Dendritic cell treated with granulocyte-macrophage colony-stimulating factor and Interleukin-4, amounts not matched to agents 40 ng/mL and 50 ng/mL, for 4 days (primary cell): ENCODE measurements at regions of chr13 and their contacts with region 1.

Region 1: GRCh38 chr13:39462428-39462827 is 140.6 kb downstream of the LHFPL6 start:
- H3K4me3 Mint-ChIP-seq: no peak overlapping the region
- H3K27ac Mint-ChIP-seq: no peak overlapping the region
- H3K4me1 Mint-ChIP-seq: no peaks in the 10 kb centered on the region
- H3K27me3 Mint-ChIP-seq: no peaks in the 10 kb centered on the region

Region 2: DNA sequence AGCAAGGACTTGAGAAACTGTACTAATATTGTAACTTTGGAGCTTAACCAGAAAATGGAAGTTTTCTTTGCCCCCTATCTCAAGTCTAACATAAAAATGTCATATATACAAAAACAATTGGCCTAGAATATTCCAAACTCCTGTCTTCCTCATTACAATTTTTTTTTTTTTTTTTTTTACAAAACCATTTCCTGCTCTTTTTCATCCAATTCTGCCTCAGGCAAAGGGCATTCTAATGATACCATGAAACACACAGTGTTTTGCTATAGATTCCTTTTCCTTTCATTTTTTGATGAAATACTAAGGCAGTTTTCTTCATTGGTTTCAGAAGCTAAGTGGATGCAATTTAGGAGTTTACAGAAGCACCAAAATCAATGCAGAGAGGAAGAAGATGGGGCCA is 20.9 kb after region 1 on chr13:
- intact Hi-C with region 1: loop called (anchors 1 kb)
- H3K4me3 Mint-ChIP-seq: no peak overlapping the region
- H3K27ac Mint-ChIP-seq: no peak overlapping the region
- H3K4me1 Mint-ChIP-seq: no peaks in the 10 kb centered on the region
- H3K27me3 Mint-ChIP-seq: no peaks in the 10 kb centered on the region

Region 3: DNA sequence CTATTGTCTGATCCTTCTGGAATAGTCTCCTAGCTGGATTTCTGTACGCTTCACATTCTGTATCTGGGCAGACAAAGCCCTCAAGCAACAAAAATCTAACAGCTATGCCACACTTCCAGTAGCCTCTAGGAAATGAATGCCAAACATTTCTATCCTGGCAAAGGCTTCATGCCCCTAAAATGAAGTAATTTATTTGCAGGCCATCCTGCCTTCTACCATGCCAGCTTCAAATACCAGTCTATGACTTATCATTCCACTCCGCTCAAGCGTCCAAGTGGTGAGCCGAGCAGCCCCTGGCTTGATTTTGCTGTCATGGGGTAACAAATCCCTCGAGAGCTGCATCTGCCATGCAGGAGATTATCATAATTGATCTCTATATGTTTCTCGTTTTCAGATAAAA is 53.7 kb after region 1 on chr13:
- intact Hi-C with region 1: no loop called
- H3K4me3 Mint-ChIP-seq: no peak overlapping the region
- H3K27ac Mint-ChIP-seq: no peak overlapping the region
- H3K4me1 Mint-ChIP-seq: no peaks in the 10 kb centered on the region
- H3K27me3 Mint-ChIP-seq: no peaks in the 10 kb centered on the region